ENCODE measurements at regions of chr14 and their contacts with region 1.

Region 1: DNA sequence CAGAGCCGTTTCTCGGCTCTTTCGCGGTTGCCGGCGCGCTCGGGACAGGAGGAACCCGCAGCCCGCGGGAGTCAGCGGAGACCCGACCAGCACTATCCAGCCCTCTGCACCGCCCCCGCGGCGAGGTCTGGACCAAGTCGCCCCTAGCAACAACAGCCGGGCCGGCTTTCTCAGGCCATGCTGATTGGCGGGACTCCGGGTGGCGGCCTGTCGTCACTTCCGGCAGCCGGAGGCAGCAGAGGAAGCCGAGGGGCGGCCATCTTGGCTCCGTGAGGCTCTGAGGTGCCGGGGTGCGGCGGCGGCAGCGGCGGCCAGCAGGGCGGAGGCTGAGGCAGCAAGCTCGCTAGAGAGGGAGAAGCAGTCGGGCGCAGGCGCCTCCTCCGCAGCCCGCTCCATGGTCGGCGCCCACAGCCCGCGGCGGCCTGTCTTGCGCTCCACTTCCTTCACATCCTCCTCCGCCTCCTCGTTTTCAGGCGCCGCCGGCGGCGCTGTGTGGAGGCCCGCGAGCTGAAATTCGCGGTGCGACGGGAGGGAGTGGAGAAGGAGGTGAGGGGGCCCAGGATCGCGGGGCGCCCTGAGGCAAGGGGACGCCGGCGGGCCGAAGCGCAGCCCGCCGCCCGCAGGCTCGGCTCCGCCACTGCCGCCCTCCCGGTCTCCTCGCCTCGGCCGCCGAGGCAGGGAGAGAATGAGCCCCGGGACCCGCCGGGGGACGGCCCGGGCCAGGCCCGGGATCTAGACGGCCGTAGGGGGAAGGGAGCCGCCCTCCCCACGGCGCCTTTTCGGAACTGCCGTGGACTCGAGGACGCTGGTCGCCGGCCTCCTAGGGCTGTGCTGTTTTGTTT is at the start of gene MARK3:
- DNase-seq: peak; percentile 98 to 99 (median 98)
- ATAC-seq: peak; percentile 98 to 99 (median 98)
- H3K4me3 ChIP-seq: peak within 1 kb of the TSS; percentile 77 to 99 (median 94)
- H3K27ac ChIP-seq: peak within 1 kb of the TSS; percentile 93 to 100 (median 98)
- H3K4me1 ChIP-seq: peaks cover 7 to 35% (median 27%) of the 10 kb centered on the region in 12 donors
- H3K27me3 ChIP-seq: no peaks in the 10 kb centered on the region
- CTCF ChIP-seq: peak in 6 of 12 donors; percentile 13 to 41 (median 32)
- POLR2A ChIP-seq: peak in 1 of 2 donors; percentile 86
- total RNA-seq, gene MARK3: 54.0 to 156 (median 111) TPM

Region 2: DNA sequence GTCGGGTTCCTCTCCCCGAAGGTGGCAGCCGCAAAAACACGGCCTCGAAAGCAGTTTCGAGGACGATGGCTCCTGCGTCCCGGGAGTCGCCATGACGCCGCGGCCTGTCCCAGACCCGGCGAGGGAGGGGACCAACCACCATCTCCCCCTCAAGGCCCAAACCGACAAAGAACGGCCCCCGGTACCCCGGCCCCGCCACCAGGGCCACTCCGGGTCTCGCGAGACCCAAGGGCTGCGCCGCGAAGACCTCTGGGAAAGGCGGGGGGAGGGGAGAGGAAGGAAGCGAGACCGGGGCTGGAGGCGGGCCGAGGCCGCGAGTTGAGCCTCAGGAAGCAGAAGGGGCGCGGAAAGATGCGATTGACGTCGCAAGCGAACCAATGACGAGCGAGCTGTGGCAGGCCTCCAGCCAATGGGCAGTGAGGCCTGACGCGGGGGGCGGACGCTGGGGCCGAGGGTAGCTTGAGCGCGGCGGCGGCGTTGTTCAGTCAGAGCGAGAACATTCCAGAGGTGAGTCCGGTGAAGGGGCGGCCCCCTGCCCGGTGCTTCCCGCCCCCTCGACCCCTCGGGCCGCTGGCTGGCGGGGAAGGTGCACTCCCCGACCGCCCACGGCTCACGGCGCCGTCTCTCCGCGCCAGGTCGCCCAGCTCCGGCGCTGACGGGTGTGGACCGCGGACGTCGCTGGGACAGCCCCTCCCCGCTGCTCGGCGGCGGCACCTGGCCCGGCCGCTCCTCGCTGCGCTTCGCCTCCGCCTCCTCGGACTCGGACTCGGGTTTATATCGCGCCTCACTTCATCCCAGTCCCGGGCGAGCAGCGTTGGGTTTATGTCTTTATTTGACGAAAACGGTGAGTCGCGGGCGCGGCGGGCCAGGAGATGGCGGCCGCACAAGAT is 51.4 kb before region 1 on chr14 and contains the start of gene EIF5:
- intact Hi-C with region 1: loop called in 8 of 10 experiments (anchors 2 to 10 kb)
- DNase-seq: peak; percentile 99 to 100 (median 99)
- ATAC-seq: peak; percentile 94 to 98 (median 96)
- H3K4me3 ChIP-seq: peak within 1 kb of the TSS; percentile 77 to 99 (median 96)
- H3K27ac ChIP-seq: peak within 1 kb of the TSS; percentile 99 to 100 (median 100)
- H3K4me1 ChIP-seq: peaks cover 4 to 50% (median 33%) of the 10 kb centered on the region in 12 donors
- H3K27me3 ChIP-seq: no peaks in the 10 kb centered on the region
- CTCF ChIP-seq: peak in 7 of 12 donors; percentile 7 to 38 (median 24)
- POLR2A ChIP-seq: peak; percentile 89 to 98
- total RNA-seq, gene EIF5: 200 to 304 (median 255) TPM

Region 3: DNA sequence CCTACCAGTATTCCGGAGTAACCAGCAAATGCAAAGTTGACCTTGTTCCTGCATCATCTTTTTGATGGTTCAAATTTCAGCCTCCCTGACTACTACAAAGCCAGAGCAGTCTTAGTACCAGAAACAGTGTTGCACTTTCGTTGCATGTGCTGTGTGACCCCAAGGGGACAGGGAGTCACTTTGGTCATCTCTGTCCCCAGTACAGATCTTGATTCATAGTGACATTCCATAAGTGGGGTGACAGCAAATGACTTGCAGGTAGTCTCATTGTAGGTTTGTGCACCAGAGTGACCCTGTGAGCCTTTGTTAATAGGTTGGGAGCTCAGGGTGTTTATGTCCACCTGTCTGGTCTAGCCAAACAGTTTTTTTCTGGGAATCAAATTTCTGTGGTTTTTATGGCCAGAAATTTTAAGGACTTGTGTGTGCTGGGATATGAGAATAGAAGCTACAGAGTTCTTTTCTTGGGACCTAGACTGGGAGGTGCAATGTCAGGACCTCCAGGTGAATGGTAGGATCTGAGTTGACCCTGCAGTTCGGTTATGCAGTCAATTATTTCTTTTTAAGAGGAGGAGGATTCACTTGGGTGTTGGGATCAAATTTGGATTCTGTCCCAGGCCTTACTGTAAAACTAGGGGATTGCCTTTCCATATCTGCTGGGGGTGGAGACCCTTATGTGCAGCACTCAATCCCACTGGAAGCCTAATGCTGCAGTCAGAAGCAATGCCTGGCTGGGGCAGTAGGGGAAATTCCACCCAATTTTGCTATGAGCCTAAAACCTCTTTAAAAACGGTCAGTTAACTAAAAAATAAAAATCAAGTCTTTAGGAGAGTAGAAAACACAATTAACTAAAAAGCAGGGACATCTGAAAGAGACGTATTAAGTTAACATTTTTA is 41.2 kb before region 1 on chr14:
- intact Hi-C with region 1: loop called in 5 of 10 experiments (anchors 5 to 10 kb)
- DNase-seq: no peak
- ATAC-seq: no peak
- H3K4me3 ChIP-seq: no peak overlapping the region
- H3K27ac ChIP-seq: no peak overlapping the region
- H3K4me1 ChIP-seq: peaks cover 0 to 10% (median 0%) of the 10 kb centered on the region in 12 donors
- H3K27me3 ChIP-seq: no peaks in the 10 kb centered on the region
- CTCF ChIP-seq: no peak
- POLR2A ChIP-seq: no peak

Measured in heart left ventricle (tissue), 16 donors.